ENCODE measurements at regions of chr3 and their contacts with region 1.

Region 1: GRCh38 chr3:111723293-111724215 is 128.4 kb upstream of the ZBED2 start:
- DNase-seq: no peak
- ATAC-seq: no peak
- H3K4me3 ChIP-seq: no peak overlapping the region
- H3K27ac ChIP-seq: no peak overlapping the region
- H3K4me1 ChIP-seq: no peaks in the 10 kb centered on the region
- H3K27me3 ChIP-seq: no peaks in the 10 kb centered on the region
- CTCF ChIP-seq: no peak
- POLR2A ChIP-seq: no peak

Region 2: DNA sequence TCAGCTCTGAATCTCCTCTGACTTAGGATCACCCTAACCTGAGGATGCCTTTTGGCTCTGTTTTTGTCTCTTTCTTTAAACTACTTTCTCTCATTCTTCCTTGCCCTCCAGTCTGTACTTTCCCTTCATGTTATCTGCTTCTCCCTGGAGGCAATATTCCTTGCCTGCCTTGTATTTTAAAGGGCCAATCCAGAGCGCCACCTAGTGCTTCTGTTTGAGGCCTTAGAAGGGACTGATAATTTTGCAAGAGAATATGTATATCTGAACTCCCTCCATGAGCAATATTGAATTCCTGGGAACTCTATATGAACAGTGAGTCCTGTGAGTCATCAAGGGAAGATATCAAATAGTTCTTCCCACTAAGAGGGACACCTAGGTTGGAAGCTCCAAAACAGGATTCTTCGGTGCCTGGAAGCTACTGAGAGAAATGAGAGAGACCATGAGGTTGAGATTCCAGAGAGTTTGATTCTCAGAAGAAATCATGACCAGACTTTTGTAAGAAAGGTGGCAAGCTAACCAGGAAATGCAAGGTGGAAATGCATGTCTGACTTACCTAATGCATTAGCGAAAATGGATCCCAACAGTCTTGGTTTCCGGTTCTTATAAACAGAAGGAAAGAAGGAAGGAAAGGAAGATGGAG is 385.4 kb before region 1 on chr3:
- intact Hi-C with region 1: no loop called
- DNase-seq: peak; percentile 50 to 71 (median 66)
- ATAC-seq: peak; percentile 58
- H3K4me3 ChIP-seq: no peak overlapping the region
- H3K27ac ChIP-seq: no peak overlapping the region
- H3K4me1 ChIP-seq: no peaks in the 10 kb centered on the region
- H3K27me3 ChIP-seq: no peaks in the 10 kb centered on the region
- CTCF ChIP-seq: peak; percentile 32 to 71 (median 63)
- POLR2A ChIP-seq: no peak

Region 3: GRCh38 chr3:111859974-111860859 is 136.7 kb after region 1 on chr3:
- intact Hi-C with region 1: loop called (anchors 10 kb)
- DNase-seq: peak; percentile 74 to 84 (median 80)
- ATAC-seq: peak; percentile 79
- H3K4me3 ChIP-seq: peak overlapping the region; percentile 31 to 75
- H3K27ac ChIP-seq: peak overlapping the region; percentile 70 to 88 (median 83)
- H3K4me1 ChIP-seq: peaks cover 42% of the 10 kb centered on the region
- H3K27me3 ChIP-seq: no peaks in the 10 kb centered on the region
- CTCF ChIP-seq: peak; percentile 17 to 73 (median 70)
- POLR2A ChIP-seq: peak; percentile 37 to 81 (median 67)

Region 4: GRCh38 chr3:111967651-111968274 is 244.2 kb after region 1 on chr3:
- intact Hi-C with region 1: loop called (anchors 5 kb)
- DNase-seq: peak; percentile 83 to 93 (median 88)
- ATAC-seq: peak; percentile 96
- H3K4me3 ChIP-seq: no peak overlapping the region
- H3K27ac ChIP-seq: peak overlapping the region in 3 of 4 donors; percentile 3 to 66 (median 33)
- H3K4me1 ChIP-seq: peaks cover 6% of the 10 kb centered on the region
- H3K27me3 ChIP-seq: no peaks in the 10 kb centered on the region
- CTCF ChIP-seq: peak; percentile 41 to 94 (median 89)
- POLR2A ChIP-seq: no peak